ENCODE measurements at regions of chr4 and their contacts with region 1.

Region 1: GRCh38 chr4:174273930-174274329 is 9.5 kb downstream of the FBXO8 start:
- DNase-seq: no peak
- ATAC-seq: no peak
- H3K4me3 ChIP-seq: no peak overlapping the region
- H3K4me3 Mint-ChIP-seq: no peak overlapping the region
- H3K27ac ChIP-seq: no peak overlapping the region
- H3K27ac Mint-ChIP-seq: no peak overlapping the region
- H3K4me1 ChIP-seq: peaks cover 3 to 5% of the 10 kb centered on the region in 2 donors
- H3K4me1 Mint-ChIP-seq: peaks cover 8 to 70% (median 62%) of the 10 kb centered on the region in 7 donors
- H3K27me3 ChIP-seq: no peaks in the 10 kb centered on the region
- H3K27me3 Mint-ChIP-seq: no peaks in the 10 kb centered on the region

Region 2: GRCh38 chr4:174228988-174229387 is 44.9 kb before region 1 on chr4:
- CTCF ChIA-PET with region 1: no interaction called
- POLR2A ChIA-PET with region 1: no interaction called
- intact Hi-C with region 1: no loop called
- DNase-seq: no peak
- ATAC-seq: no peak
- H3K4me3 ChIP-seq: no peak overlapping the region
- H3K4me3 Mint-ChIP-seq: no peak overlapping the region
- H3K27ac ChIP-seq: no peak overlapping the region
- H3K27ac Mint-ChIP-seq: no peak overlapping the region
- H3K4me1 ChIP-seq: no peaks in the 10 kb centered on the region
- H3K4me1 Mint-ChIP-seq: peaks cover 0 to 2% (median 0%) of the 10 kb centered on the region in 7 donors
- H3K27me3 ChIP-seq: no peaks in the 10 kb centered on the region
- H3K27me3 Mint-ChIP-seq: peaks cover 11 to 30% (median 22%) of the 10 kb centered on the region in 5 donors

Region 3: GRCh38 chr4:174252412-174252811 is 21.5 kb before region 1 on chr4:
- CTCF ChIA-PET with region 1: no interaction called
- POLR2A ChIA-PET with region 1: no interaction called
- intact Hi-C with region 1: loop called in 1 of 2 experiments (anchors 2 kb)
- DNase-seq: no peak
- ATAC-seq: no peak
- H3K4me3 ChIP-seq: no peak overlapping the region
- H3K4me3 Mint-ChIP-seq: no peak overlapping the region
- H3K27ac ChIP-seq: no peak overlapping the region
- H3K27ac Mint-ChIP-seq: no peak overlapping the region
- H3K4me1 ChIP-seq: no peaks in the 10 kb centered on the region
- H3K4me1 Mint-ChIP-seq: peaks cover 3 to 26% (median 20%) of the 10 kb centered on the region in 7 donors
- H3K27me3 ChIP-seq: no peaks in the 10 kb centered on the region
- H3K27me3 Mint-ChIP-seq: no peaks in the 10 kb centered on the region

Measured in naive thymus-derived CD4-positive, alpha-beta T cell (primary cell).